Mucosa of descending colon (tissue), 3 donors: ENCODE measurements at regions of chr15 and their contacts with region 1.

Region 1: GRCh38 chr15:74768771-74769342 is 13.0 kb upstream of the CSK start:
- DNase-seq: peak; percentile 65 to 74 (median 72)
- ATAC-seq: peak; percentile 59
- H3K4me3 ChIP-seq: no peak overlapping the region
- H3K4me1 ChIP-seq: peaks cover 16% of the 10 kb centered on the region
- CTCF ChIP-seq: peak; percentile 76

Region 2: GRCh38 chr15:74373731-74374647 is 394.9 kb before region 1 on chr15:
- intact Hi-C with region 1: loop called in 1 of 2 experiments (anchors 10 kb)
- DNase-seq: peak; percentile 95 to 96 (median 96)
- ATAC-seq: peak; percentile 98
- H3K4me3 ChIP-seq: peak overlapping the region; percentile 22
- H3K4me1 ChIP-seq: peaks cover 10% of the 10 kb centered on the region
- CTCF ChIP-seq: peak; percentile 78

Region 3: DNA sequence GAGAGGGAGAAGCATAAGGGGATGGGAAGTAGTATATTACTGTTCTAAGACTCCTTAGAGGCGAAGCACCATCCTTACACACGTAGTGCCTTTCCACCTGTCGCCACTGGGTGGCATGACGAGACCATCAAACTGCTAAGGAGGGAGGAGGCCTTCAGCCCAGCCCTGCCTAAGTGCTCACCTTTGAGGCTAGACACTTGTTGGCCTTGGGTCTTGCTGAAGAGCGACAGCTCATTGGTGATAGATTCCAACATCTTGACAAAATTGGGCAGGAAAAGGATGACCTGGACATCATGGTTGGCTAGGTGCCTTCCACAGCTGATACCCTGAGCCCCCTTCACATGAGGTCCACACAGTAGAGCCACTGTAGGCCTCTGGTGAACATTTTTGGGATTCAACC is 133.6 kb before region 1 on chr15:
- intact Hi-C with region 1: loop called (anchors 2 kb)
- DNase-seq: peak in 2 of 3 donors; percentile 79 to 83
- ATAC-seq: peak; percentile 87
- H3K4me3 ChIP-seq: no peak overlapping the region
- H3K4me1 ChIP-seq: no peaks in the 10 kb centered on the region
- CTCF ChIP-seq: peak; percentile 70